ENCODE measurements at regions of chr1 and their contacts with region 1.

Region 1: GRCh38 chr1:154236855-154237254 is 16.1 kb downstream of the UBAP2L start:
- DNase-seq: no peak
- H3K4me3 ChIP-seq: no peak overlapping the region
- H3K4me3 Mint-ChIP-seq: peak overlapping the region; percentile 6
- H3K27ac Mint-ChIP-seq: no peak overlapping the region
- H3K4me1 ChIP-seq: peaks cover 27% of the 10 kb centered on the region
- H3K4me1 Mint-ChIP-seq: peaks cover 27% of the 10 kb centered on the region
- H3K27me3 ChIP-seq: no peaks in the 10 kb centered on the region
- H3K27me3 Mint-ChIP-seq: no peaks in the 10 kb centered on the region
- CTCF ChIP-seq: no peak

Region 2: GRCh38 chr1:154220071-154220969 is 16.5 kb before region 1 on chr1 and contains the start of gene UBAP2L:
- CTCF ChIA-PET with region 1: no interaction called
- POLR2A ChIA-PET with region 1: no interaction called
- intact Hi-C with region 1: loop called (anchors 1 kb)
- DNase-seq: peak; percentile 99
- H3K4me3 ChIP-seq: peak within 1 kb of the TSS; percentile 97
- H3K4me3 Mint-ChIP-seq: peak within 1 kb of the TSS; percentile 94
- H3K27ac Mint-ChIP-seq: peak within 1 kb of the TSS; percentile 99
- H3K4me1 ChIP-seq: peaks cover 31% of the 10 kb centered on the region
- H3K4me1 Mint-ChIP-seq: peaks cover 15% of the 10 kb centered on the region
- H3K27me3 ChIP-seq: no peaks in the 10 kb centered on the region
- H3K27me3 Mint-ChIP-seq: no peaks in the 10 kb centered on the region
- CTCF ChIP-seq: no peak
- total RNA-seq, gene UBAP2L: 195 and 198 TPM in 2 replicates

Region 3: DNA sequence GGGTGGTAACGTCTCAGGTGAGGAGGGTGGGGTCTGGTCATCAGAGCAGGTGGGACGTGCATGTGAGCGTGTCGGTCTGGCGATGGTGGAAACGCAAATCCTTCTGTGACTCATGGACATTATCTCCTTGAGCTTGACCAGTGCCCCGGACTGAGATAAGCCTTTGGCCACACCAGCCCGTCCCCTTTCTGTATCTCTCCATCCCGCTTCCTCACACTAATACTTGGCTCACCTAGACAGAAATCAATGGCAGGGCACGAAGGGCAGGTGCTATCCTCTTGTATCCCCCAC is 76.2 kb after region 1 on chr1:
- CTCF ChIA-PET with region 1: no interaction called
- POLR2A ChIA-PET with region 1: no interaction called
- intact Hi-C with region 1: no loop called
- DNase-seq: no peak
- H3K4me3 ChIP-seq: no peak overlapping the region
- H3K4me3 Mint-ChIP-seq: no peak overlapping the region
- H3K27ac Mint-ChIP-seq: no peak overlapping the region
- H3K4me1 ChIP-seq: no peaks in the 10 kb centered on the region
- H3K4me1 Mint-ChIP-seq: no peaks in the 10 kb centered on the region
- H3K27me3 ChIP-seq: no peaks in the 10 kb centered on the region
- H3K27me3 Mint-ChIP-seq: no peaks in the 10 kb centered on the region
- CTCF ChIP-seq: no peak